ENCODE measurements at regions of chr16 and their contacts with region 1.

Region 1: DNA sequence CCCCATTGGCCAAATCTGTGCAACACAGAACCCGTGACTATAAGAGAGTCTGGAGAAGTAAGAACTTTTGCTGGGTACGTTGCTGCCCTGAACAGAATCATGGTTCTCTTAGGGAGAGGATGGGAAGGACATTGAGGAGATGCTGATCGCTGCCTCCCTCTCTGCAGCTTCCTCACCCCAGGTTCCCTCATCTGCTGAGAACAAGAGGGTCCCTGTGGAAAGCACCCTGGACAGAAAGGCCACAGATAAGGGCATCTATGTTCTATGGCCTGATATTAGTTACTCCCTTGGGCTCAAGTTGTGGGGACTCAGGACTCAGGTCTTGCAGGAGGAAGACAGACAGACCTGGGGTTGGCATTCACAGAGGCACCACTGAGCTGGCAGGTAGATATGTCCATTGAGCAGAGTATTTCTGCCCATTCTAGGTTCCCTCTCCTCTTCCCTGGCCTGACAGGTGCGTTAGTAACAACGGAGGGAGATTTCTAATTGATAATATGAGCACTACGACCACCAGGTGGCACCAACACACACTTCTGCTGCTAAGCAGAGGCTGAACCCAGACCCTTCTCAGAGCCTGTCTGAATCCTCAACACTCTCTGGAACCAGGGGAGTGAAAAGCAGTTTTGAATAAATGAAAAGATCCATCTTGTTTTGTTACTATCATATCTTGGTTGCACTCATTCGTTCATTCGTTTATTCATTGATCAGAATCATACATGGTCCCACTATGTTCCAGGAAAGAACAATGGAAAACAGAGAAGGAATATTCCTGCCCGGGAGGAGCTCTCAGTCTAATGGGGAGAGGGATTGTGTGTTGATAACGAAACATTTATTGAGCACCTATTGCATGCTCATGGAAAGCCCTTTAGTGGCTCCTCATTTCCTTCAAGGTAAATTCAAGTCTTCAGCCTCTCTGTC is 56.4 kb downstream of the SLC6A2 start:
- DNase-seq: peak; percentile 61
- H3K4me3 Mint-ChIP-seq: no peak overlapping the region
- H3K27ac Mint-ChIP-seq: no peak overlapping the region
- H3K4me1 Mint-ChIP-seq: no peaks in the 10 kb centered on the region
- H3K27me3 Mint-ChIP-seq: peaks cover 11% of the 10 kb centered on the region

Region 2: DNA sequence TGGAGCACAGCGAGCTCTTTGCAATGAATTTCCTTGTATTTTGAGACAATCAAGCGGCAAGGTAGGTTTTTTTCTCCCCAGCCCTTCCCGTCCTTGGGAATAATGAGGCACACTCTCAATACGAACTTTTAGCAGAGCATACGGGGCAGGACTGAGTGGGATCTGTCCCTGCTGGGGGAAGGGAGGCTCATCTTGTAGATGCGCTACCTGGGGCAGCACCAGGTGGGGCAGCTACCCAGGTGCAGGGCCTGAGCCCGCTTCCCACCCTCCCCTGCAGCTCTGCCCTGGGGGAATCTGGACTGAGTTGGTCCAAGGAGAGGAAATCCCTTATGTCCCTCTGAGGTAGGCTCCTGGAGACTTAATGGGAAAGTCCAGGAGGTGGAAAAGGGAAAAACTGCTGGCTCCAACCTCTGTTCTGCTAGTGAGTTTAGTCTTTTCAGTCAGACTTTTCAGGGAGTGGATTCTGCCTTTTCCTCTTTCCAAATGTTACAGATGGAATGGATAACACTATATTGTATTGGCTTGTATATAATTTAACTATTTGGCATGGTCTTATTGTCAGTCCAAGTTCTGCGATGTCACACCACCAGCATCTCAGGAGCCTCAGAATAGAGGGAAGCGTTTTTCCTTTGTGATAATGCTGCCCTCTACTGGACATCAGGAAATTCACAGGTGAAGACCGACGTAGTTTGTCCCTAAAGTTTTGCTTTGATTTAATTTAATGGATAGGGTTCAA is 130.3 kb after region 1 on chr16:
- CTCF ChIA-PET with region 1: interaction called, 22 read pairs
- POLR2A ChIA-PET with region 1: no interaction called
- DNase-seq: no peak
- H3K4me3 Mint-ChIP-seq: no peak overlapping the region
- H3K27ac Mint-ChIP-seq: no peak overlapping the region
- H3K4me1 Mint-ChIP-seq: peaks cover 11% of the 10 kb centered on the region
- H3K27me3 Mint-ChIP-seq: peaks cover 12% of the 10 kb centered on the region